ENCODE measurements at regions of chr6 and their contacts with region 1.

Region 1: GRCh38 chr6:25981568-25982263 is 19.1 kb downstream of the TRIM38 start:
- DNase-seq: no peak
- H3K4me3 Mint-ChIP-seq: no peak overlapping the region
- H3K27ac Mint-ChIP-seq: no peak overlapping the region
- H3K4me1 Mint-ChIP-seq: peaks cover 22% of the 10 kb centered on the region
- H3K27me3 Mint-ChIP-seq: no peaks in the 10 kb centered on the region

Region 2: GRCh38 chr6:25717866-25718740 is 263.6 kb before region 1 on chr6:
- CTCF ChIA-PET with region 1: no interaction called
- POLR2A ChIA-PET with region 1: no interaction called
- DNase-seq: no peak
- H3K4me3 Mint-ChIP-seq: no peak overlapping the region
- H3K27ac Mint-ChIP-seq: no peak overlapping the region
- H3K4me1 Mint-ChIP-seq: no peaks in the 10 kb centered on the region
- H3K27me3 Mint-ChIP-seq: peaks cover 11% of the 10 kb centered on the region

Region 3: GRCh38 chr6:25946631-25947030 is 35.1 kb before region 1 on chr6:
- CTCF ChIA-PET with region 1: no interaction called
- POLR2A ChIA-PET with region 1: no interaction called
- DNase-seq: no peak
- H3K4me3 Mint-ChIP-seq: no peak overlapping the region
- H3K27ac Mint-ChIP-seq: peak overlapping the region; percentile 12
- H3K4me1 Mint-ChIP-seq: peaks cover 27% of the 10 kb centered on the region
- H3K27me3 Mint-ChIP-seq: no peaks in the 10 kb centered on the region

Region 4: DNA sequence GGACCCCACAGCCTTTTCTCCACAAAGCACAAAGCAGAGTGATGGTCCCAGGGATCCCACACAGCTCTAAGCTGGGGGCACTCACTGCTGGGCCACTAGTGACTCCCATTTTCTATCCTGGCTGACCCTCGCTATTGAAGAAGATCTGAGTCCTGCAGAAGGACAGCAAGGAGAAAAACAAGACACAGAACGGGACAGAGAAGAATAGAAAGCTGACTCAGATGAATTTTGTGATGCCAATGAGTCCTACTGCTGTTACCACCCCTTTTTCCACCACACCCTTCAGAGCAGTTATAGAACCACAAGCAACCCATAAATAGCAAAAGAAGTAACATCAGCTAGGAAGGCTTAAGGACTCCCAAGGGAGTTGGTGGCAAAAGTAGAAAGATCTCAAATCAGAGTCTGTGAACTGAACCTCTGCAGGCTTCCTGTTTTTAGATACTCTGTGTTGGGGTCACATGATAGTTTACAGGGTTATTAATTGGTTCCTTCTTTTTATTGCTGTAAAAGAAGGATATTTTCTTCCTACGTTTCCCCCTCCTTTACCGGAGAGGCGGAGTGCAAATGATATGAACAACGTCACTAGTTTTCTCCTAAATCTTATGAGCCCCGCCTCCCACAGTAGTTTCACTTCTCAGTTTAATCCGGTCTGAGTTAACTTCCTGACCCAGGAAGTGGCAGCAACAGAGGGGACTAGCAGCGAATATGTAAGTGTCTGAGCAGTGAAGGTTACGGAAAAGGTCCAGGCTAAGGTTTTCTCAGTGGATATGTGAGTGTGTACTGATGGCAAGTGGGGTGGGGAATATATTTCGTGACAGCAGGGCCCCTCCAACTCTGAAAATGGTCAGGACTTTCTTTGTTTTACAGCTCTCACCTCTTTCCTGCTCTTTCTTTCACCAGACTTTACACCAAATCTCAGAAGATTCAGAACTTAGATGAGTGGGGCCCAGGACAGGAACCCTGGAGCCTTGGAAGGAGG is 19.3 kb before region 1 on chr6 and contains the start of gene TRIM38:
- CTCF ChIA-PET with region 1: interaction called, 3 read pairs
- POLR2A ChIA-PET with region 1: interaction called, 10 read pairs
- DNase-seq: peak; percentile 84
- H3K4me3 Mint-ChIP-seq: peak within 1 kb of the TSS; percentile 96
- H3K27ac Mint-ChIP-seq: peak within 1 kb of the TSS; percentile 96
- H3K4me1 Mint-ChIP-seq: peaks cover 80% of the 10 kb centered on the region
- H3K27me3 Mint-ChIP-seq: no peaks in the 10 kb centered on the region
- total RNA-seq, gene TRIM38: 32.6 to 33.5 TPM

Region 5: DNA sequence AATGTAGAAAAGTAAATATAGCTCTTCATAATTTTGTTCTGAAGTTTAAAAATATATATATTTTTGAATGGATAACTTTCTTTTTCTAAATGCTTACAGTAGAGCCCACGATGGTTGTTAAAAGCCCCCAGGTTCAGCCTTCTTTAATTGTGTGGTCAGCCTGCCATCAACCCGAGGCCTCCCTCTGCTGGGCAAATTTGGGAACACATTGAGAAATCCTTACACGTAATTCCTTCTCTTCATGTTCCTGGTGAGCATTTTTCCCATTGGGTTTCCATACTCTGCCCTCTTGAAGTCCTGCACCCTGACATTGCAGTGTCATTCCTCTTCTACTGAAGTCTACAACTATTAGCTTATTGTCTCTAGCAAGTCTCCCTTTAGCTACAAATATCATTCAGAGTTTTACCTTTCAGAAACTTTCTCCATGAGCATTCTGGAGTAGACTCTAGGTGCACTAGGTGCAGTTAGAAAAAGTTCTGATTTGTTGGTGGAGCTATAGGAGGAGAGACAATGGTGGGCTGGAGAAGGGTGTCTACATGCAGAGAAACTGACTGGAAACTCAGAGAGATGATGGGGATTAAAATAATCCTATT is 21.5 kb after region 1 on chr6:
- CTCF ChIA-PET with region 1: interaction called, 10 read pairs
- POLR2A ChIA-PET with region 1: interaction called, 4 read pairs
- DNase-seq: peak; percentile 44
- H3K4me3 Mint-ChIP-seq: no peak overlapping the region
- H3K27ac Mint-ChIP-seq: no peak overlapping the region
- H3K4me1 Mint-ChIP-seq: peaks cover 5% of the 10 kb centered on the region
- H3K27me3 Mint-ChIP-seq: no peaks in the 10 kb centered on the region

Region 6: GRCh38 chr6:26071135-26071534 is 89.4 kb after region 1 on chr6:
- CTCF ChIA-PET with region 1: no interaction called
- POLR2A ChIA-PET with region 1: no interaction called
- DNase-seq: no peak
- H3K4me3 Mint-ChIP-seq: no peak overlapping the region
- H3K27ac Mint-ChIP-seq: no peak overlapping the region
- H3K4me1 Mint-ChIP-seq: peaks cover 1% of the 10 kb centered on the region
- H3K27me3 Mint-ChIP-seq: peaks cover 20% of the 10 kb centered on the region

Region 7: GRCh38 chr6:26454631-26455030 is 472.9 kb after region 1 on chr6:
- CTCF ChIA-PET with region 1: no interaction called
- POLR2A ChIA-PET with region 1: no interaction called
- DNase-seq: no peak
- H3K4me3 Mint-ChIP-seq: no peak overlapping the region
- H3K27ac Mint-ChIP-seq: no peak overlapping the region
- H3K4me1 Mint-ChIP-seq: peaks cover 27% of the 10 kb centered on the region
- H3K27me3 Mint-ChIP-seq: no peaks in the 10 kb centered on the region

Measured in activated CD4-positive, alpha-beta memory T cell treated with anti-CD3 and anti-CD28 coated beads, Interleukin-2, amount 10 ng/mL, durations not matched to agents 7 days and 5 days (primary cell).